CD4-positive, alpha-beta T cell (primary cell): ENCODE measurements at regions of chr12 and their contacts with region 1.

Region 1: GRCh38 chr12:25052196-25052913 is 103.5 kb upstream of the BCAT1 start:
- DNase-seq: peak; percentile 15 to 89 (median 48)
- ATAC-seq: peak; percentile 75
- H3K4me3 ChIP-seq: peak overlapping the region; percentile 72
- H3K4me3 Mint-ChIP-seq: peak overlapping the region; percentile 99
- H3K27ac ChIP-seq: peak overlapping the region; percentile 79
- H3K27ac Mint-ChIP-seq: peak overlapping the region; percentile 99
- H3K4me1 ChIP-seq: peaks cover 20% of the 10 kb centered on the region
- H3K4me1 Mint-ChIP-seq: peaks cover 54% of the 10 kb centered on the region
- H3K27me3 ChIP-seq: no peaks in the 10 kb centered on the region
- H3K27me3 Mint-ChIP-seq: no peaks in the 10 kb centered on the region
- CTCF ChIP-seq: no peak

Region 2: DNA sequence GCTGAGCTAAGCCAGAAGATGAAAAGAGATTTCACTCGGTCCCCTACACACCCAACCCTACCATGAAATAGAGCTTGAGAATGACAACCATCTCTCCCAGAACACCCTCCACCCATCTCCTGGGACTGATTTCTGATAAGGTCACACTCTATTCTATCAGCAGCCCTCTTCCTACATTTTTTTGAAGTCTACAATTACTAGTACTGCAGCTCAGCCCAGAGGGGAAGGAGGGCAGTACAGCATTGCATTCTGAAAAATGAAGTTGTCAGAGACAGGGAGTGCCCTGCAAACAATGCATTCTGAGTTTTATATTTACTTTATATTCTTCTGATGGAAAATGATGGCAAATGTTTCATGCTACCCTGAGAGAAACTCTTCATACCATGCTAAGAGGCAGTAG is 421.9 kb before region 1 on chr12:
- CTCF ChIA-PET with region 1: no interaction called
- POLR2A ChIA-PET with region 1: no interaction called
- intact Hi-C with region 1: no loop called
- DNase-seq: no peak
- ATAC-seq: no peak
- H3K4me3 ChIP-seq: no peak overlapping the region
- H3K4me3 Mint-ChIP-seq: no peak overlapping the region
- H3K27ac ChIP-seq: no peak overlapping the region
- H3K27ac Mint-ChIP-seq: no peak overlapping the region
- H3K4me1 ChIP-seq: no peaks in the 10 kb centered on the region
- H3K4me1 Mint-ChIP-seq: no peaks in the 10 kb centered on the region
- H3K27me3 ChIP-seq: no peaks in the 10 kb centered on the region
- H3K27me3 Mint-ChIP-seq: no peaks in the 10 kb centered on the region
- CTCF ChIP-seq: no peak

Region 3: GRCh38 chr12:25063873-25064628 is 11.7 kb after region 1 on chr12:
- CTCF ChIA-PET with region 1: interaction called, 3 read pairs
- POLR2A ChIA-PET with region 1: interaction called, 46 read pairs
- intact Hi-C with region 1: loop called in 1 of 2 experiments (anchors 1 kb)
- DNase-seq: no peak
- ATAC-seq: no peak
- H3K4me3 ChIP-seq: no peak overlapping the region
- H3K4me3 Mint-ChIP-seq: no peak overlapping the region
- H3K27ac ChIP-seq: no peak overlapping the region
- H3K27ac Mint-ChIP-seq: no peak overlapping the region
- H3K4me1 ChIP-seq: peaks cover 3% of the 10 kb centered on the region
- H3K4me1 Mint-ChIP-seq: peaks cover 42% of the 10 kb centered on the region
- H3K27me3 ChIP-seq: no peaks in the 10 kb centered on the region
- H3K27me3 Mint-ChIP-seq: no peaks in the 10 kb centered on the region
- CTCF ChIP-seq: no peak

Region 4: DNA sequence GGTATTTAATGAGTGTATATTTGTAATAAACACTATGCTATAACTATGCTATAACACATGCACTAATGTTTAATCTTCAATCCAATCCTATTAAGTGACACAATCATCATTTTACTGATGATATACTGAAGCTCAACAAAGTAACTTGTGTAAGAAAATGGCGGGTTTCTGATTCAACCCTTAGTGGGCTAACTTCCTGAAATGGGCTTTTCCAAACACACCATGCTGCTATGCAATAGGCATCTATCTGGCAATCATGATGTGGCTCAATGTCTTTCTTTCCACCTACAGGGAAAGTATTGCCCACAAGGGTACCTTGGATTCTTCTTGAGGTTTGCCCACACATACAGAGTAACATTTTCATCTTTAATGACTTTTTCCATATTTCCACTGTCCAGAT is 94.3 kb after region 1 on chr12:
- CTCF ChIA-PET with region 1: no interaction called
- POLR2A ChIA-PET with region 1: no interaction called
- intact Hi-C with region 1: no loop called
- DNase-seq: no peak
- ATAC-seq: no peak
- H3K4me3 ChIP-seq: no peak overlapping the region
- H3K4me3 Mint-ChIP-seq: no peak overlapping the region
- H3K27ac ChIP-seq: no peak overlapping the region
- H3K27ac Mint-ChIP-seq: no peak overlapping the region
- H3K4me1 ChIP-seq: no peaks in the 10 kb centered on the region
- H3K4me1 Mint-ChIP-seq: no peaks in the 10 kb centered on the region
- H3K27me3 ChIP-seq: no peaks in the 10 kb centered on the region
- H3K27me3 Mint-ChIP-seq: no peaks in the 10 kb centered on the region
- CTCF ChIP-seq: no peak

Region 5: GRCh38 chr12:25186788-25187397 is 134.5 kb after region 1 on chr12:
- CTCF ChIA-PET with region 1: no interaction called
- POLR2A ChIA-PET with region 1: interaction called, 3 read pairs
- intact Hi-C with region 1: loop called (anchors 2 to 5 kb)
- DNase-seq: peak in 4 of 14 experiments; percentile 32 to 56 (median 55)
- ATAC-seq: peak; percentile 73
- H3K4me3 ChIP-seq: peak overlapping the region; percentile 42
- H3K4me3 Mint-ChIP-seq: peak overlapping the region; percentile 81
- H3K27ac ChIP-seq: peak overlapping the region; percentile 7 to 11
- H3K27ac Mint-ChIP-seq: peak overlapping the region; percentile 78
- H3K4me1 ChIP-seq: no peaks in the 10 kb centered on the region
- H3K4me1 Mint-ChIP-seq: peaks cover 17% of the 10 kb centered on the region
- H3K27me3 ChIP-seq: no peaks in the 10 kb centered on the region
- H3K27me3 Mint-ChIP-seq: no peaks in the 10 kb centered on the region
- CTCF ChIP-seq: no peak

Region 6: DNA sequence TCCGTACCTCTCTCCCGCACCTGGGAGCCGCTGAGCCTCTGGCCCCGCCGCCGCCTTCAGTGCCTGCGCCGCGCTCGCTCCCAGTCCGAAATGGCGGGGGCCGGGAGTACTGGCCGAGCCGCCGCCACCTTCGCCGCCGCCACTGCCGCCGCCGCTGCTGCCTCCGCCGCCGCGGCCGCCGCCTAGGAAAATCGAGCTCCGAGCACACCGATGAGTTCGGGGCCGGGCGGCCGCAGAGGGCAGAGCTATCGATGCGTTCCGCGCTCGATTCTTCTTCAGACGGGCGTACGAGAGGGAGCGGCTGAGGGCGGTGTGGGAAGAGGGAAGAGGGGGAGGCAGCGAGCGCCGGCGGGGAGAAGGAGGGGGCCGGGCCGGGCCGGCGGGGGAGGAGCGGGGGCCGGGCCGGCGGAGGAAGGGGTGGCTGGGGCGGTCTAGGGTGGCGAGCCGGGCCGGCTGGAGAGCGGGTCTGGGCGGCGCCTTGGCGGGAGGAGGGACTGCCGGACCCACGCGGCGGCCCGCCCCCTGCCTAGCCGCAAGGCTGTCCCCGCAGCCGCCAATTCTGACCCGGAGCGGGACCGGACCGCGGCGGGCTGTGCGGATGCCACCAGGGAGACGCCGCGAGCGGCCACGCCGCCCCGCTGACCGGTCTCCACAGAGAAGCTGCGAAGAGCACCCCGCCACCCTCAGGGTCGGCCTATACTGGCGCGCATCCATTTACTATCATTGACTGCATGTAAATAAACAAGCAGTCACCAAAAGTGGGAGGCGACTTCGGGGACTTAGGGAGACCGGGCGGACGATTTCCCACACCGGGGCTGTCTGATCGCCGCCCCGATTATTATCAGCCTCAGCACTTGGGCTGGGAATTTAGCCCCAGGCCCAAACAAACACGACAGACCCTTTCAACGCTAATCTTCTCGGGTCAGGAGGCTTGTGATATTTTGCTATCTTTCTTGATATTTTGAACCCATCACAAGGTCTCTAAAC is 198.7 kb after region 1 on chr12 and contains the start of gene KRAS:
- CTCF ChIA-PET with region 1: no interaction called
- POLR2A ChIA-PET with region 1: interaction called, 13 read pairs
- intact Hi-C with region 1: loop called in 1 of 2 experiments (anchors 5 kb)
- DNase-seq: peak; percentile 83 to 97 (median 89)
- ATAC-seq: peak; percentile 91
- H3K4me3 ChIP-seq: peak within 1 kb of the TSS; percentile 85
- H3K4me3 Mint-ChIP-seq: peak within 1 kb of the TSS; percentile 99
- H3K27ac ChIP-seq: peak within 1 kb of the TSS; percentile 52 to 73
- H3K27ac Mint-ChIP-seq: peak within 1 kb of the TSS; percentile 85
- H3K4me1 ChIP-seq: peaks cover 29% of the 10 kb centered on the region
- H3K4me1 Mint-ChIP-seq: peaks cover 53% of the 10 kb centered on the region
- H3K27me3 ChIP-seq: no peaks in the 10 kb centered on the region
- H3K27me3 Mint-ChIP-seq: no peaks in the 10 kb centered on the region
- CTCF ChIP-seq: no peak
- total RNA-seq, gene KRAS: 45.0 to 48.7 TPM

Region 7: DNA sequence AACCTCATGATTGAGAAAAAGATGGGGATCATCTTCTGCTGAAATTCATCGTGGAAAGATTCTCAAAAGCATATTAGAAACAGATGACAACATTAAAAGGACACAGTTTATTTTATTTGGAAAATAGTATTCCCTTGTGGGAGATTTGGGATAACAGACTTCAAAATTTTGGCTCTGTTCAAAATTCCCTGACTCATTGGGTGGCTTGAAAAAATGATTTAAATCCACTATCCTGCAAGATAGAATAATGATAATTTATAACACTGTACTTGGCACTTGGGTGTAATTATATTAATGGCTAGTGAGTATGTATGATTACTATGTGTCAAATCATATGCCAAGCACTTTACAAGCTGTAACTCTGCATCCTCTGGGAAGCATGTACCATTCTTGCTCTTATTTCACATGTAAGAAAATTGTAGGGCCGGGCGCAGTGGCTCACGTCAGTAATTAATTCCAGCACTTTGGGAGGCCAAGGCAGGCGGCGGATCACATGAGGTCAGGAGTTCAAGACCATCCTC is 371.9 kb after region 1 on chr12:
- CTCF ChIA-PET with region 1: no interaction called
- POLR2A ChIA-PET with region 1: no interaction called
- intact Hi-C with region 1: no loop called
- DNase-seq: no peak
- ATAC-seq: no peak
- H3K4me3 ChIP-seq: no peak overlapping the region
- H3K4me3 Mint-ChIP-seq: no peak overlapping the region
- H3K27ac ChIP-seq: no peak overlapping the region
- H3K27ac Mint-ChIP-seq: no peak overlapping the region
- H3K4me1 ChIP-seq: no peaks in the 10 kb centered on the region
- H3K4me1 Mint-ChIP-seq: no peaks in the 10 kb centered on the region
- H3K27me3 ChIP-seq: no peaks in the 10 kb centered on the region
- H3K27me3 Mint-ChIP-seq: no peaks in the 10 kb centered on the region
- CTCF ChIP-seq: no peak

Region 8: DNA sequence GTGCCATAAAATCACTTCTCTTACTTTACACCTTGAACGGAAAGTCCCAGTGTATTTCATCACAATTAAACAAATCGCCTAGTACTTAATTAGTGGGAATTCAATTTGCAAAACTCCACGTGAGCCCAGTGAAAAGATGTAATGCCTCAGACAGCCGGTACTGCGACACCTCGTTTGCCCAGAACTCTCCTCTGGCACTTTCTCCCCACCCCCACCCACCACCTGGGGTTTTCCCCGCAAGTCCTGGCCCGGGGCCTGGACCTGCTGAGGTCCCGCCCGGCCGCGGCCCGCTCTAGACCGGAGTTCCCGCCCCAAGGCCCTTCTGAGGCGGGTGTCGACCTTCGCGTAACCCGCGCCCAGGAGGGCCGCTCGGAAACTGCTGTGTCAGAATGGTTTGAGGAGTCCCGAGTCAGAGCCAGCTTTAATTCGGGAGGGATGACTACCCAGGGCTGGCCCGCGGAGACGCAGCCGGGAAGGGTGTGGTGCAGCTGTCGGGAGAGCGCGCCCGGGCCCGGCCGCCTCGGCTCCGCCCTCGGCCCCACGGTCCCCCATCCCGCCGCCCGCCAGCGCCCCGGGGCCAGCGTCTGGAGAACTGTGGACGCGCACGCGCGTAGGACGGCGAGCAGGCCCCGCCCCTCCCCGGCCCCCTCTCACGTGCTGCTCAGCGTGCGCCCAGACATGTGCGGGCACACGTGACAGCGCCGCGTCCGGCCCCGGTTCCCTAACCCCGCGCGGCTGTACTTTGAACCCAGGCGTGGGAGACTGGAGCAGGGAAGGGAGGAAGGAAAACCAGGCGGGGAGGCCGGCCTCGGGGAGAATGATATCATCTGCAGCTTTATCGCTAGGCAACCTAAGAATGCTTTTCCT is 1061.7 kb after region 1 on chr12:
- CTCF ChIA-PET with region 1: no interaction called
- POLR2A ChIA-PET with region 1: no interaction called
- intact Hi-C with region 1: loop called in 1 of 2 experiments (anchors 5 kb)
- DNase-seq: peak; percentile 45 to 87 (median 66)
- ATAC-seq: peak; percentile 76
- H3K4me3 ChIP-seq: peak overlapping the region; percentile 57
- H3K4me3 Mint-ChIP-seq: peak overlapping the region; percentile 87
- H3K27ac ChIP-seq: no peak overlapping the region
- H3K27ac Mint-ChIP-seq: peak overlapping the region; percentile 45
- H3K4me1 ChIP-seq: peaks cover 12% of the 10 kb centered on the region
- H3K4me1 Mint-ChIP-seq: peaks cover 4% of the 10 kb centered on the region
- H3K27me3 ChIP-seq: peaks cover 3 to 20% of the 10 kb centered on the region in 2 experiments
- H3K27me3 Mint-ChIP-seq: peaks cover 32% of the 10 kb centered on the region
- CTCF ChIP-seq: no peak